Activated naive CD4-positive, alpha-beta T cell treated with anti-CD3 and anti-CD28 coated beads, Interleukin-2, amount 10 ng/mL, durations not matched to agents 7 days and 5 days (primary cell): ENCODE measurements at regions of chr9 and their contacts with region 1.

Region 1: GRCh38 chr9:2087500-2088313 is 72.6 kb downstream of the SMARCA2 start:
- DNase-seq: peak; percentile 29
- H3K4me3 Mint-ChIP-seq: no peak overlapping the region
- H3K27ac Mint-ChIP-seq: no peak overlapping the region
- H3K4me1 Mint-ChIP-seq: peaks cover 24% of the 10 kb centered on the region
- H3K27me3 Mint-ChIP-seq: no peaks in the 10 kb centered on the region

Region 2: GRCh38 chr9:2072752-2073405 is 14.8 kb before region 1 on chr9:
- CTCF ChIA-PET with region 1: interaction called, 12 read pairs
- DNase-seq: no peak
- H3K4me3 Mint-ChIP-seq: no peak overlapping the region
- H3K27ac Mint-ChIP-seq: no peak overlapping the region
- H3K4me1 Mint-ChIP-seq: no peaks in the 10 kb centered on the region
- H3K27me3 Mint-ChIP-seq: no peaks in the 10 kb centered on the region

Region 3: GRCh38 chr9:2271426-2271825 is 183.7 kb after region 1 on chr9:
- CTCF ChIA-PET with region 1: no interaction called
- DNase-seq: no peak
- H3K4me3 Mint-ChIP-seq: no peak overlapping the region
- H3K27ac Mint-ChIP-seq: no peak overlapping the region
- H3K4me1 Mint-ChIP-seq: no peaks in the 10 kb centered on the region
- H3K27me3 Mint-ChIP-seq: peaks cover 4% of the 10 kb centered on the region